ENCODE measurements at regions of chr20 and their contacts with region 1.

Region 1: GRCh38 chr20:62302341-62303058 is at the start of gene ADRM1:
- DNase-seq: peak; percentile 89 to 99 (median 96)
- H3K4me3 ChIP-seq: peak within 1 kb of the TSS; percentile 70 to 97 (median 89)
- H3K27ac ChIP-seq: peak within 1 kb of the TSS; percentile 42 to 98 (median 94)
- H3K27me3 ChIP-seq: no peaks in the 10 kb centered on the region
- CTCF ChIP-seq: peak; percentile 80 to 100 (median 98)
- total RNA-seq, gene ADRM1: 41.7 to 76.3 (median 60.3) TPM

Region 2: DNA sequence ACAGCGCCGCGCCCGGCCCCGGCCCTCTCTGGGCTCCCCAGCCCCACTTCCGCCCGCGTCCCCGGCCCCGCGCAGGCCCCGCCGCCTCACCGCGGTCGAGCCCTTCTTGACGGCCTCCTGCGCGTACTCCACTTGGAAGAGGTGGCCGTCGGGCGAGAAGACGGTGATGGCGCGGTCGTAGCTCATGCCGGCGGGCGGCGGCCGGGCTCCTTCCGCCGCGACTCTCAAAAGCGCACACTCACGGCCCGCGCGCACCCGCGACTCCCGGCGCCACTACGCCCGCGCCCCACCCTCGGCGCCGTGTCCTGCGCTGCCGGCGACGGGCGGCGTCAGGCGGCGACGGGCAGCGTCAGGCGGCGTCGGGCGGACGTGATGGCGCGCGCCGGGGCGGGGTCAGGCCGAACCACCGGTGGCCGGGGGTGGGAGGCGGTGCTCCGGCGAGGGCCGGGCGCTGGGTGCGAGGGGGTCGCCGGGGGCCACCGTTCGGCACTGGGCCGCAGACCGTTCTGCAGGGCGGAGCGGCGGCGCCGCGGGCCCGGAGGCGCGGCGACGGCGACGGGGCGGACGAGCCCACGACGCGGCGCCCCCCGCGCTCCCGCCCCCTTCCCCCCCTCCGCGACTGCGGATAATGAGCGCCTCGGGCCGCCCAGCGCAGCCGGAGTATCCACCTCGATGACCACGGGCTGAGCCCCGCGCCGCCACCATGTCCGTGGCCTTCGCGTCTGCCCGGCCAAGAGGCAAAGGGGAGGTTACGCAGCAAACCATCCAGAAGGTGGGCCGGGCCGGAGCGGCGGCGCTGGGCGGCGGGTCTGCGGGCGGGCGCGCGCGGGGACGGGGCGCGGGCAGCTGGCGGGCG is 159.2 kb before region 1 on chr20 and contains the starts of genes PSMA7 and SS18L1:
- intact Hi-C with region 1: loop called in 1 of 2 experiments (anchors 5 kb)
- DNase-seq: peak; percentile 66 to 93 (median 84)
- H3K4me3 ChIP-seq: peak within 1 kb of the TSS; percentile 61 to 98 (median 86)
- H3K27ac ChIP-seq: peak within 1 kb of the TSS in 58 of 59 donors; percentile 57 to 100 (median 94)
- H3K27me3 ChIP-seq: no peaks in the 10 kb centered on the region
- CTCF ChIP-seq: peak in 3 of 56 donors; percentile 12 to 29 (median 13)
- total RNA-seq, gene PSMA7: 92.8 to 154 (median 124) TPM
- total RNA-seq, gene SS18L1: 23.7 to 55.2 (median 35.7) TPM

Region 3: DNA sequence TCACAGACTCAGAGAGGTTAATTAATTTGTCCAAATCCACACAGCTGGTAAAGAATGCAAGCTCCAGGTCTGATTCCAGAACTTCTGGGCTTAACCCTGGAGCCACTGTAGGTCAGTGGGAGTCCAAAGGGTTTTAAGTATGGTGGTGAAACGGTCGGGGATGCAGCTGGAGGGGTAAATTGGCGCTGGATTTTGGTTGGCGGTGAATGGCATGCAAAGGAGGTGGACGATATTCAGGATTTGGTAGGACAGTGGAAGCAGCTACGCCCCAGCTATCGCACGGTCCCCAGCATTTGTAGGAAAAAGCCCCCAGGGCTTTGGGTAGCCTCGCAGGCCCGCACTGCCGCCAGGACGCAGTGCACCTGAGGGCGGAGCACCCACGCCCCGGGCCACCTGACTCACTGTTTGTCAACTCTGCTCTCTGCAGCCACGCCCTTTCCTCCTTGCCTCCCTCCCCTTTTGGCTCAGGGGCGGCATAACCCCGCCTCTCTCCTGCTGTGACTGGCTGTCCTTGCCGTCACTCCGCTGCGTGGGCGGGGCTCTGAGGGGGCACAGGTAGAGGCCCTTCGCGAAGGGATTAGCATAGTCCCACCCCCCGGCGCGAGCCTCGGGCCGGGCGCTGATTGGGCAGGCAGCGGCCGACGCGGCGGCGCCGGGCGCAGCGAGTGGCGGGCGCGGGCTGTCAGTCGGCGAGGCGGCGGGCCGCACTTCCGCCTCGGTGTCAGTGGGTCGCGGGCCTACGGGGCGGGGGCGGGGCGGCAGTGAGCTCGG is 64.5 kb before region 1 on chr20 and contains the start of gene OSBPL2:
- intact Hi-C with region 1: loop called in 1 of 2 experiments (anchors 5 kb)
- DNase-seq: peak; percentile 99 to 100 (median 100)
- H3K4me3 ChIP-seq: peak within 1 kb of the TSS; percentile 51 to 88 (median 77)
- H3K27ac ChIP-seq: peak within 1 kb of the TSS in 42 of 59 donors; percentile 1 to 82 (median 53)
- H3K27me3 ChIP-seq: peaks cover 0 to 6% (median 0%) of the 10 kb centered on the region in 45 donors
- CTCF ChIP-seq: peak in 4 of 56 donors; percentile 12 to 29 (median 22)
- total RNA-seq, gene OSBPL2: 54.4 to 93.9 (median 71.6) TPM

Region 4: GRCh38 chr20:62386383-62387218 is 84.1 kb after region 1 on chr20 and contains the start of gene RPS21:
- intact Hi-C with region 1: loop called (anchors 1 to 2 kb)
- DNase-seq: peak; percentile 79 to 94 (median 88)
- H3K4me3 ChIP-seq: peak within 1 kb of the TSS; percentile 71 to 100 (median 96)
- H3K27ac ChIP-seq: peak within 1 kb of the TSS; percentile 16 to 97 (median 88)
- H3K27me3 ChIP-seq: no peaks in the 10 kb centered on the region
- CTCF ChIP-seq: peak in 26 of 56 donors; percentile 8 to 52 (median 34)
- total RNA-seq, gene RPS21: 411 to 983 (median 581) TPM

Region 5: GRCh38 chr20:62407221-62407992 is 104.9 kb after region 1 on chr20 and contains the start of gene CABLES2:
- intact Hi-C with region 1: loop called in 1 of 2 experiments (anchors 2 kb)
- DNase-seq: peak; percentile 91 to 97 (median 94)
- H3K4me3 ChIP-seq: peak within 1 kb of the TSS; percentile 52 to 85 (median 71)
- H3K27ac ChIP-seq: peak within 1 kb of the TSS in 21 of 59 donors; percentile 2 to 84 (median 35)
- H3K27me3 ChIP-seq: no peaks in the 10 kb centered on the region
- CTCF ChIP-seq: peak in 42 of 56 donors; percentile 6 to 60 (median 35)
- total RNA-seq, gene CABLES2: 7.0 to 18.7 (median 11.9) TPM

Measured in dorsolateral prefrontal cortex (tissue), 120 donors.